Head of caudate nucleus (tissue), 42 donors: ENCODE measurements at regions of chr18 and their contacts with region 1.

Region 1: GRCh38 chr18:74450626-74451025 is 6.5 kb downstream of the DIPK1C start:
- DNase-seq: peak in 40 of 42 donors; percentile 20 to 87 (median 67)

Region 2: GRCh38 chr18:74217476-74218143 is 233.0 kb before region 1 on chr18:
- intact Hi-C with region 1: no loop called
- DNase-seq: no peak

Region 3: DNA sequence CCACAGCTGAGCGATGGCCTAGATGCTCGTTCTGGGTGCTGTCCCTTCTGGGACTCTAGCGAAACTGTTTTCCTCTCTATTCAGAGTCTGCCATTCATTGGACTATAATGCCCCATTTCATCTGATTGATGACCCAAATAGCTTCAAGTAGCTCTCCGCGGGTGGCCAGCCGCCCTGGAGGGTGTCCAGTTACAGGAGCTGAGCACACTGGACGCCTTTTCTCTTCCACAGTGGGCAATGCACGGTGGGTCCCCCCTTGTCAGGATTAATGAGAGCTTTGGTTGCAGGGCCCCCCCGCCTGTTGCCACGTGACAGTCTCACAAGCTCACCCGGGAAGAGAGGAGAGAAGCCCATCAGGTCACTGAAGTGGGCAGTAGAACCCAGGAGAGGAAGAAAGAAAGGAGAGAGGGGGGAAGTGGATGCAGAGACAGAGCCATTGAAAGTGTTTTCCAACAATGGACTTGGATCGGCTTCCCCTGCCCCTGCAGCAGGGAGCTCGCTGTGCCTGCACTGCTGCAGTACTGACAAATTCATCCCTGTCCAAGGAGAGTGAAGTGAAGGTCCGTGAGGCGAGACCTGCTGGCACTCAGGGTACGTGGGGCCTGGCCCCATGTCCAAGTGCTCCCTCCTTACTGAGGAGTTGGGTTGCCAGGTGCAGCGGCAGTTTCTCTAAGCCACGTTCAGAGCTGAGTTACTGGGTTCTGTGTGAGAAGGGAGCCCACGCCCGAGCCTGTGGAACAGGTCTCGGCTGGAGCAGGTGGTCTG is 38.3 kb before region 1 on chr18:
- intact Hi-C with region 1: loop called (anchors 5 kb)
- DNase-seq: peak; percentile 67 to 91 (median 84)